Posterior vena cava (tissue), 2 donors: ENCODE measurements at regions of chr1 and their contacts with region 1.

Region 1: GRCh38 chr1:15400627-15401026 is 9.1 kb upstream of the EFHD2 start:
- DNase-seq: no peak

Region 2: GRCh38 chr1:14228681-14229080 is 1171.9 kb before region 1 on chr1:
- intact Hi-C with region 1: no loop called
- DNase-seq: no peak

Region 3: DNA sequence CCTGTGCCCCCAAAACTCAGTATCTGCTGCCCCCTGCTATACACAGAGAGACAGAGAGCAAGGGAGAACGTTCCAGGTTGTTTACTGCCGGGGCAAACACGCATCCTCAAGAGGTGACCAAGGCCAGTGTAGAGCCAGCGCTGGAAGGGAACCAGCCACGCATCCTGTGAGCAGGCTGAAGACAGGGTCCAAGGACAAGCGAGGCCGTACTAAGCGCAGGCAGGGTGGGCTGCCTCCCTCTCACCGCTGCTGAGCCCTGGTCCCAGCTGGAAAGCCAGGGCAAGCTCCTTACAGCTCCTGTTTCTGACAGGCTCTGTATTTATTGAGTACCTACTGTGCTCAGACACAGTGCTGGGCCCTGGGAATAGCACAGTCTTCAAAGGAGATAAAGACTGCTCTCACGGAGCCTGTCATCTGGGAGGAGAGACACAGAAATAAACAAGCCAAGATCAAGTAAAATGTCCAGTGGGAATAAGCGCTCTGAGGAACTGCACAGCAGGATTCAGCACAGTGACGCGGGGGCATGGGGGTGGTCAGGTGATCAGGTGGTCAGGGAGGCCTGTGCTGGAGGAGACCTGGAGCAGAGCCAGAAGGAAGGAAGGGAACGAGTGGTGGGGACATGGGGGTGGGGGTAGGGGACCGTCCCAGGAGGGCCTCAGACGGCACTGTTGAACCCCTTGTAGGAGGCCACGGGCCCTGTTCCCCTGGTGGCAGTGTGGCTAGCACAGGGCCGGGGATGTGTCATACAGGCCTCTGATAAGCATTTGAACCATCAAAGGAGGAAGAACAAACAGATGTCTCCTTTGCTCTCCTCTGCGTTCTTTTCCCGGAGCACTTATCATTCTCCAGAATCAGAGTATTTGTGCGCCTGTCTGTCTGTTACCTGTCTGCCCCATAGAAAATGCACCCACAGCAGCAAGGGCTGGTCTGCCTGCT is 28.7 kb before region 1 on chr1:
- intact Hi-C with region 1: loop called in 1 of 2 experiments (anchors 1 kb)
- DNase-seq: no peak